Activated CD4-positive, alpha-beta memory T cell treated with anti-CD3 and anti-CD28 coated beads for 36 hours (primary cell): ENCODE measurements at regions of chr13 and their contacts with region 1.

Region 1: GRCh38 chr13:49495783-49496762 is at the start of gene PHF11:
- DNase-seq: peak; percentile 95
- H3K4me3 Mint-ChIP-seq: peak within 1 kb of the TSS; percentile 91
- H3K27ac Mint-ChIP-seq: peak within 1 kb of the TSS; percentile 98
- H3K4me1 Mint-ChIP-seq: peaks cover 52% of the 10 kb centered on the region
- H3K27me3 Mint-ChIP-seq: no peaks in the 10 kb centered on the region
- total RNA-seq, gene PHF11: 89.2 to 99.4 TPM

Region 2: DNA sequence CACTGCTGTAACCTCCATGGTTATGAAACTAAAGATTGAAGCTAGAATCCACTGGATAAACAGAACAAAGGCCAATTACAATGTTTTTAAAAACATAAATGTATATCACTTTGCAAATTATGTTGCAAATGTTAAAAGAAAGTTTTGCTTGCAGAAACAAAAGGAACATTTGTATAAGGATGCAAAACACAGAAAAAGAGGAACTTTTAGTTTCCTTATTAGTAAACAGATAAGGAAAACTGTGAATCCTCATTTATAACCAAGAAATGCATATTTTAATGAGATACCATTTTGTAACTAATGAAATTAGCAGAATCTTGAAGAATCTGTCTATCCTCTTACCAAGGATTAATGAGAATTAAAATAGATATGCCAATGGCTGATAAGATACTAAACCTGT is 1115.5 kb before region 1 on chr13:
- CTCF ChIA-PET with region 1: no interaction called
- POLR2A ChIA-PET with region 1: no interaction called
- intact Hi-C with region 1: no loop called
- DNase-seq: no peak
- H3K4me3 Mint-ChIP-seq: no peak overlapping the region
- H3K27ac Mint-ChIP-seq: no peak overlapping the region
- H3K4me1 Mint-ChIP-seq: no peaks in the 10 kb centered on the region
- H3K27me3 Mint-ChIP-seq: no peaks in the 10 kb centered on the region

Region 3: DNA sequence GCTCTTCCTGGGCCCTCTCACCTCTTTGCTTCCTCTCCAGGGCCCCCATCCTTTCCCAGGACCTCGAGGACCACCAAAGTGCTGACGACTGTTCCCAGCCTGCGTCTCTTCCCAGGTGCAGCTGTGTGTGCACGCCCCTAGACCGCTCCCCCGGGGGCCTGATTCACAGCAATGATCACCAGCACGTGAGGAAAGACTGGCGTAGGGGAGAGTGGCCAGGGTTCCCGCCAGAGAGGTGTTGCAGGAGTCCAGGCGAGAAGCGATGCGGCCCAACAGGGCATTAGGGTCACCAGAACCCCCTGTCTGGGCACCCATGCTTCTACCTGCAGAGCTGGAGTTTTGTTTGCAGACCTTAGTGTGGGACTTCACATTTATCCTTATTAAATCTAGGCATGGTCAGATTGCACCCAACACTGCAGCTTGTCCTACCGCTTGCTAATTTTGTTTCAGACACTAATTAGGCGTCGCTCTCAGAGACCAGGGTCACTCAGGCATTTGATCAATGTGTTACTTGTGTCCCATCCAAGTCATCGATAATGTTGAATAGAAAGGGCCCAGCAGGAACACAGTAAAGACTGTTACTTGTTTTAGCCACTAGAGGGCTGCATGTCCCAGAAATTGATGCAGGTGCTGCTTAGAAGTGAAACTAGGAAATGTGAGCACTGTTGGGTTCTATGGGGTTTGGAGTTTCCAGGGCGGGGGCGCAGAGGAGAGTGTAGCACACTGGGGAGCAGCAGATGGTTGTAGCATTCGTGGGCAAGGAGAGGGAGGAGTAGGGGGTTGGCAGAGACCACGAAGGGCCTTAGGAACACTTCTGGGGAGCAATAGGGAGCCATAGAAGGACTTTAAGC is 195.1 kb before region 1 on chr13:
- CTCF ChIA-PET with region 1: no interaction called
- POLR2A ChIA-PET with region 1: no interaction called
- intact Hi-C with region 1: loop called (anchors 2 kb)
- DNase-seq: peak; percentile 75
- H3K4me3 Mint-ChIP-seq: peak overlapping the region; percentile 33
- H3K27ac Mint-ChIP-seq: no peak overlapping the region
- H3K4me1 Mint-ChIP-seq: peaks cover 9% of the 10 kb centered on the region
- H3K27me3 Mint-ChIP-seq: no peaks in the 10 kb centered on the region

Region 4: DNA sequence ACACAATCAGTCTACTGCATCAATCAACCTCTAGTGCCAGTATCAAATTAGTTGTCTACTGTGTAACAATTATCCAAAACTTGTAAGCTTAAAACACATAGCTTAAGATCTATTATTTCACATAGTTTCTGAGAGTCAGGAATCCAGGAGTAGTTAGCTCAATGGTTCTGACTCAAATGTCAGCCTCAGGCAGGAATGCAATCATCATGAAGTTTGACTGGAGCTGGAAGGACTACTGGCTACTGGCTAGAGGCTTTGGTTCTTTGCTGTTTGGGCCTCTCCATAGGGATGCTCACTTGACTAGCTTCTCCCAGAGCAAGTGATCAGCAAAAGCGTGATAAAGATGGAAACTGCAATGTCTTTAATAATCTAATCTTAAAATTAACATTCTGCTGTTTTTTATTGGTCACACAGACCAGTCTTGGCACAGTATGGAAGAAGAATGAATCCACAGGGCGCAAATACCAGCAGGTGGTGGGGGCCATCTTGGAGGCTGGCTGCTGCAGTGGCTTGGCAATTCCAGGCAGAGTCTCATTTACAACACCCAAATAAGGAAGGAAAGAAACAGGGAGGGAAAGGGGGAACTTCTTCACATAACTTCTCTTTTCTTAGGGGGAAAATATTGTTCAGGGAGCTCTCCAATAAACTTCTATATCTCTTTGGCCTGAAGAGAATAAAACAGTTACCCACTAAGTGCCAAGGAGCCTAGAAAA is 67.9 kb before region 1 on chr13:
- CTCF ChIA-PET with region 1: no interaction called
- POLR2A ChIA-PET with region 1: no interaction called
- intact Hi-C with region 1: no loop called
- DNase-seq: no peak
- H3K4me3 Mint-ChIP-seq: no peak overlapping the region
- H3K27ac Mint-ChIP-seq: no peak overlapping the region
- H3K4me1 Mint-ChIP-seq: no peaks in the 10 kb centered on the region
- H3K27me3 Mint-ChIP-seq: no peaks in the 10 kb centered on the region

Region 5: GRCh38 chr13:49454388-49455006 is 41.6 kb before region 1 on chr13:
- CTCF ChIA-PET with region 1: no interaction called
- POLR2A ChIA-PET with region 1: interaction called, 13 read pairs
- intact Hi-C with region 1: loop called (anchors 1 kb)
- DNase-seq: no peak
- H3K4me3 Mint-ChIP-seq: no peak overlapping the region
- H3K27ac Mint-ChIP-seq: peak overlapping the region; percentile 79
- H3K4me1 Mint-ChIP-seq: peaks cover 35% of the 10 kb centered on the region
- H3K27me3 Mint-ChIP-seq: no peaks in the 10 kb centered on the region

Region 6: DNA sequence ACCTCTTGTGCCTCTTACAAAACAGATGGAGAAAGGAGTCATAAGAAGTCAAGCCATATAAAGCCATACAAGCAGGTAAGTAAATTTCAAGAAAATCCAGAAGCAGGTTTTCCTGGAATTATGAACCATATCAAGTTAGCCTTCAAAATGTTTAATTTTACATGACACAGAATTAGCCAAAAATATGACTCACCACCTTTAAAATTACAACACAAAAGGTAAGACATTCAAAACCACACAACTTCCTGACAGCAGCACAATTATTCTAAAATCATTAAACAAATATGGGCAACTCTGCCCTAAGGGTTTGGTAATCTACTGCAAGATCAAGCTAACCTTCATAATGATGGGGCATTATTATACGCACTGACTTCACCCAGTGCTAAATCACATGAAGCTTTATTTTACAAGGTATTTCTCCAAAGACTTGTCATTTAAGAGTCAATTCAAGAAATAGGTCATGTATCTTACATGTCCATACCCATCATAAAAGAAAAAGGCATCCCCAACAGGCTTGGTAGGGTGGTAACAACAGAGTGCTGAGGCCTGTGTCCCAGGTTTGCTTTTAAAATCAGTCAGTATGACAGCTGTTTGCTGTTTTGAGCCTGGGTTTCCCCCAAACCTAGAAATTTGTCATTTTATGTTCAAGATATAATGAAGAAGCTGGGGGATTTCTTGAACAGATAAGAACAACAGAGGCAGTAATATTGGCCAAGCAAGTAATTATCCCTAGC is 74.0 kb after region 1 on chr13:
- CTCF ChIA-PET with region 1: no interaction called
- POLR2A ChIA-PET with region 1: interaction called, 6 read pairs
- intact Hi-C with region 1: loop called (anchors 1 kb)
- DNase-seq: peak; percentile 43
- H3K4me3 Mint-ChIP-seq: no peak overlapping the region
- H3K27ac Mint-ChIP-seq: peak overlapping the region; percentile 88
- H3K4me1 Mint-ChIP-seq: peaks cover 33% of the 10 kb centered on the region
- H3K27me3 Mint-ChIP-seq: no peaks in the 10 kb centered on the region

Region 7: GRCh38 chr13:49585220-49586157 is 89.4 kb after region 1 on chr13 and contains the start of gene RCBTB1:
- CTCF ChIA-PET with region 1: no interaction called
- POLR2A ChIA-PET with region 1: interaction called, 3 read pairs
- intact Hi-C with region 1: loop called (anchors 1 kb)
- DNase-seq: peak; percentile 74
- H3K4me3 Mint-ChIP-seq: peak within 1 kb of the TSS; percentile 82
- H3K27ac Mint-ChIP-seq: peak within 1 kb of the TSS; percentile 64
- H3K4me1 Mint-ChIP-seq: peaks cover 31% of the 10 kb centered on the region
- H3K27me3 Mint-ChIP-seq: no peaks in the 10 kb centered on the region
- total RNA-seq, gene RCBTB1: 18.7 to 19.3 TPM

Region 8: GRCh38 chr13:49606747-49607648 is 110.9 kb after region 1 on chr13:
- CTCF ChIA-PET with region 1: interaction called, 3 read pairs
- POLR2A ChIA-PET with region 1: no interaction called
- intact Hi-C with region 1: loop called (anchors 2 kb)
- DNase-seq: peak; percentile 89
- H3K4me3 Mint-ChIP-seq: peak overlapping the region; percentile 74
- H3K27ac Mint-ChIP-seq: no peak overlapping the region
- H3K4me1 Mint-ChIP-seq: peaks cover 2% of the 10 kb centered on the region
- H3K27me3 Mint-ChIP-seq: no peaks in the 10 kb centered on the region

Region 9: DNA sequence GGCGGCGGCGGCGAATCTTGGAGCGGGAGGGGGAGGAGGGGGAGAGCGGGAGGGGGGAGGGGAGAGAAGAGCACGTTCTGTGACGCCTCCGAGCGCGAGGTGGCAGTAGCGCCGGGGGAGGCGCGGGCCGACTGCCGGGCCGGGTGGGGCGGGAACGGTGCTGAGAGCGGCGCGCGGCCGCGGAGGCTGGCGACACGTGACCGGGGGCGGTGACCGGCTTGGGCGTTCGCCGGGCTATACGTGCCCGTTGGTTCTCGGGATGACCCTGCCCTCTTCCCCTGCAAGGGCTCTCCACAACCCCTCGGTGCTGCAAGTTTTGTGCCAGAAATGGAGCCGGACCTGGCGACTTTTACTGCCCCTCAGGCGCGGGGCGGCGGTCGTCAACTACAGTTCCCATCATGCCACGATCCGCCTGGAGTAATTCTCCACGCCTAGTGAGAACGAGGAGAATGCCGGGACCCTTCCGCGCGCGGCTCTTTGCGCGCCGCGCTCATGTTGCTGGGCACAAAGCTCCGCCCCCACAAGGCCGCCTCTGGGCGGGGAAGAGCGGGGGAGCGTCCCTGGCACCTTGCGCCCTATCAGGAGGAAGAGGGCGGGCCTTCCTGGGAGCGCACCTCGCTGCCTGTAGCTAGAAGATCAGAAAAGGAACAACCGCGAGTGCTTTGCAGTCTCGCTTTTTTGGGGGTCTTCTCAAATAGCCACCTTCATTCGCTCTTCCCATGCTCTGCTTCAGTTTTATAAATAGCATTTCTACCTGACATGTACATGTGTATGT is 296.7 kb after region 1 on chr13 and contains the start of gene KPNA3:
- CTCF ChIA-PET with region 1: no interaction called
- POLR2A ChIA-PET with region 1: no interaction called
- intact Hi-C with region 1: loop called (anchors 2 kb)
- DNase-seq: peak; percentile 96
- H3K4me3 Mint-ChIP-seq: peak within 1 kb of the TSS; percentile 91
- H3K27ac Mint-ChIP-seq: peak within 1 kb of the TSS; percentile 93
- H3K4me1 Mint-ChIP-seq: peaks cover 27% of the 10 kb centered on the region
- H3K27me3 Mint-ChIP-seq: no peaks in the 10 kb centered on the region
- total RNA-seq, gene KPNA3: 42.0 to 44.0 TPM